GM12878 (cell line): ENCODE measurements at regions of chr12 and their contacts with region 1.

Region 1: GRCh38 chr12:102948941-102949352 is 8.5 kb upstream of the ASCL1 start:
- DNase-seq: no peak
- ATAC-seq: peak; percentile 32
- H3K4me3 ChIP-seq: no peak overlapping the region
- H3K27ac ChIP-seq: no peak overlapping the region
- H3K4me1 ChIP-seq: peaks cover 8% of the 10 kb centered on the region
- H3K27me3 ChIP-seq: no peaks in the 10 kb centered on the region; a peak in 1 of 4 replicates
- CTCF ChIP-seq: peak; percentile 88 to 94 (median 90)
- EP300 ChIP-seq: no peak
- POLR2A ChIP-seq: no peak
- RAD21 ChIP-seq: peak; percentile 88

Region 2: DNA sequence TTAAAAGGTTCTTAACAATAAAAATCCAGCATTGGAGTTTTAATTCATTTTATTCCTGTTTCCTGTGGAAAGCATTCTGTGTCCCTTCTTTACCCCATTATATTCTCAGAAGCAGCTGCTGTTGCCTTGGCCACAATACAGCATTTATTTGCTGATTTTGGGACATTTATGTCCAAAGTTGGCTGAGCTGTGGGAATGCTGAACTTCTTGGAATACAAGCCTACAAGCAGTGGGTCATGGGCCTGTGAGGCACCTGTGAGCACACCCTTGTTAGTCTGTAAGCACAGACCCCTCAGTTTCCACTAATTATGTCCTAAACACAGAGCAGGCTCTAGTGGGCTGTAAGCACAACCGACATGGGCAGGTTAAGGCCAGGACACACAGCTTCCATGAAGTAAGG is 346.4 kb before region 1 on chr12:
- CTCF ChIA-PET with region 1: no interaction called
- POLR2A ChIA-PET with region 1: no interaction called
- RAD21 ChIA-PET with region 1: no interaction called
- SMC1A ChIA-PET with region 1: no interaction called
- in situ Hi-C with region 1: no loop called
- intact Hi-C with region 1: no loop called
- DNase-seq: no peak
- ATAC-seq: no peak
- H3K4me3 ChIP-seq: no peak overlapping the region
- H3K27ac ChIP-seq: no peak overlapping the region
- H3K4me1 ChIP-seq: no peaks in the 10 kb centered on the region
- H3K27me3 ChIP-seq: no peaks in the 10 kb centered on the region
- CTCF ChIP-seq: no peak
- EP300 ChIP-seq: no peak
- POLR2A ChIP-seq: no peak
- RAD21 ChIP-seq: no peak

Region 3: GRCh38 chr12:102903337-102904007 is 45.5 kb before region 1 on chr12:
- CTCF ChIA-PET with region 1: interaction called, 11 read pairs
- POLR2A ChIA-PET with region 1: no interaction called
- RAD21 ChIA-PET with region 1: interaction called, 6 read pairs
- SMC1A ChIA-PET with region 1: interaction called, 6 read pairs
- in situ Hi-C with region 1: no loop called
- intact Hi-C with region 1: no loop called
- DNase-seq: no peak
- ATAC-seq: peak; percentile 53
- H3K4me3 ChIP-seq: no peak overlapping the region
- H3K27ac ChIP-seq: no peak overlapping the region
- H3K4me1 ChIP-seq: no peaks in the 10 kb centered on the region
- H3K27me3 ChIP-seq: no peaks in the 10 kb centered on the region
- CTCF ChIP-seq: no peak
- EP300 ChIP-seq: no peak
- POLR2A ChIP-seq: no peak
- RAD21 ChIP-seq: no peak

Region 4: DNA sequence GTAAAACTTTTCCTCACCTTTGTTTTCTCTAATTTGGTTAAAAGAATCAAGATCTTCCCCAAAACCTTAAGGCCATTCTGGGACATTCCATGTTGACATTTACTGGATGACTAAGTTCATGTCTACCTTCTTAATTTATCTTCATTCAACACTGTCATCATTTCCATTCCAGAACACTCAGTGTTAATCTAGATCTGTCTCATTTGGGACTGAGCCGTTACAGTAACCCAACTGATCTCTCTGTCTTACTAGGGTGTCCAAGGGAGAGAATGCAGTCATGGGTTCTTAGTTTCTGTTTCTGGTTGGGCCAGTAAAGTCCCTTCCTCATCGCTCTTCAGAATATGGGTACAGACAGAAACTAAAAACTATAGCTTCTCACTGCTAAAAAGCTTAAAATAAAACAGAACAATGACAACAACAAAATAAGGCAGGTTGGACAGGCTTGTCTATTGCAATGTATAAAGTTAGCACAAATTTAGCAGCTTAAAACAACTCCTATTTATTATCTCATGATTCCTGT is 153.3 kb after region 1 on chr12:
- CTCF ChIA-PET with region 1: interaction called, 8 read pairs
- POLR2A ChIA-PET with region 1: interaction called, 4 read pairs
- RAD21 ChIA-PET with region 1: interaction called, 20 read pairs
- SMC1A ChIA-PET with region 1: interaction called, 8 read pairs
- in situ Hi-C with region 1: no loop called
- intact Hi-C with region 1: no loop called
- DNase-seq: peak; percentile 72
- ATAC-seq: peak; percentile 91
- H3K4me3 ChIP-seq: no peak overlapping the region
- H3K27ac ChIP-seq: peak overlapping the region; percentile 82
- H3K4me1 ChIP-seq: peaks cover 29% of the 10 kb centered on the region
- H3K27me3 ChIP-seq: no peaks in the 10 kb centered on the region
- CTCF ChIP-seq: no peak
- EP300 ChIP-seq: peak; percentile 73 to 89; a peak in 3 of 4 replicates
- POLR2A ChIP-seq: no peak
- RAD21 ChIP-seq: peak; percentile 22; the same call in 1 of the 2 replicates

Region 5: GRCh38 chr12:103269946-103270345 is 321.0 kb after region 1 on chr12:
- CTCF ChIA-PET with region 1: interaction called, 7 read pairs
- POLR2A ChIA-PET with region 1: no interaction called
- RAD21 ChIA-PET with region 1: interaction called, 6 read pairs
- SMC1A ChIA-PET with region 1: interaction called, 4 read pairs
- in situ Hi-C with region 1: no loop called
- intact Hi-C with region 1: loop called (anchors 2 kb)
- DNase-seq: no peak
- ATAC-seq: 0 out of 3 replicates have a peak, but pooled peaks have one; percentile 6
- H3K4me3 ChIP-seq: no peak overlapping the region
- H3K27ac ChIP-seq: no peak overlapping the region
- H3K4me1 ChIP-seq: no peaks in the 10 kb centered on the region
- H3K27me3 ChIP-seq: no peaks in the 10 kb centered on the region
- CTCF ChIP-seq: no peak
- EP300 ChIP-seq: no peak
- POLR2A ChIP-seq: no peak
- RAD21 ChIP-seq: no peak

Region 6: GRCh38 chr12:103495479-103496456 is 546.8 kb after region 1 on chr12 and contains the start of gene C12orf42:
- CTCF ChIA-PET with region 1: interaction called, 82 read pairs
- POLR2A ChIA-PET with region 1: interaction called, 3 read pairs
- RAD21 ChIA-PET with region 1: interaction called, 30 read pairs
- SMC1A ChIA-PET with region 1: interaction called, 69 read pairs
- in situ Hi-C with region 1: loop called (anchors 5 kb)
- intact Hi-C with region 1: no loop called
- DNase-seq: peak; percentile 63
- ATAC-seq: peak; percentile 88
- H3K4me3 ChIP-seq: peak within 1 kb of the TSS; percentile 72
- H3K27ac ChIP-seq: 0 out of 2 replicates have a peak within 1 kb of the TSS, but pooled peaks have one; percentile 12
- H3K4me1 ChIP-seq: peaks cover 8% of the 10 kb centered on the region; the same call in 1 of the 2 replicates
- H3K27me3 ChIP-seq: no peaks in the 10 kb centered on the region
- CTCF ChIP-seq: peak; percentile 70 to 85 (median 71)
- EP300 ChIP-seq: peak in 1 of 2 experiments; percentile 42; a peak in 1 of 4 replicates
- POLR2A ChIP-seq: no peak
- RAD21 ChIP-seq: peak; percentile 81
- polyA plus RNA-seq, gene C12orf42: 1.8 to 1.9 TPM

Region 7: DNA sequence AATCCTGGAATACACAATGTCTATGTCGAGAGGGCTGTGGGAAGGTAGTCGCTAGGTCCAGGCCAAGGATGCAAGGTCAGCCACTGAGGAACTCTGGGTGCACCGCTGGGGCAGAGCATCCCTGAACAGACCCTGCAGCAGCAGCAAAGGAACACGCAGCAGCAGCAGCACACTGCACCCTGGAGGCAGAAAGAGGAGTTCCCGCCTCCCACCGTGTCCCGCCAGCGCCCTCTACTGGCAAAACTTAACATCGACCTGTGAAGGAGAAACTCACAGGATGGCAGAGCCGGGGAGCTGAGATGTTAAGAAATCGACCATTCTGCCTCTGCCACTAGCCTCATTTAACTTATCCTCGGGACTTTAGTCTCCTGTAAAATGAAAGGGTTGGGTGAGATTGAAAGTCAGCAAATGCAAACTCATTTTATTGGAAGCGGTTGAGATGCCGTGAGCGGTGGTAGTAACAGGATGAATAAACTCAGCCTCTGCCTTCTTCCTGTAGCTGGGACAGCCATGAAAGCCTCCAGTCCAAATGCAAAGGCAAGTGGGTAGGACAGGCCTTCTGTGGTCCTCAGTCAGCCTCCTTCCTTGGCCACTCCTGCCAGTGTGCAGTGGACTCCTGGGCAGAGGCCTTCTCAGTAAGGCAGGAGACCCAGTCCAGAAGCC is 683.7 kb after region 1 on chr12:
- CTCF ChIA-PET with region 1: interaction called, 20 read pairs
- POLR2A ChIA-PET with region 1: no interaction called
- RAD21 ChIA-PET with region 1: interaction called, 12 read pairs
- SMC1A ChIA-PET with region 1: interaction called, 3 read pairs
- in situ Hi-C with region 1: no loop called
- intact Hi-C with region 1: loop called (anchors 5 kb)
- DNase-seq: peak; percentile 31
- ATAC-seq: peak; percentile 98
- H3K4me3 ChIP-seq: no peak overlapping the region
- H3K27ac ChIP-seq: no peak overlapping the region
- H3K4me1 ChIP-seq: no peaks in the 10 kb centered on the region
- H3K27me3 ChIP-seq: no peaks in the 10 kb centered on the region; a peak in 1 of 4 replicates
- CTCF ChIP-seq: peak; percentile 100; a peak in 5 of 6 replicates
- EP300 ChIP-seq: no peak
- POLR2A ChIP-seq: no peak
- RAD21 ChIP-seq: peak; percentile 95